ENCODE measurements at regions of chr17 and their contacts with region 1.

Region 1: GRCh38 chr17:48295362-48296288 is 134.4 kb downstream of the SKAP1 start:
- DNase-seq: no peak
- H3K4me3 Mint-ChIP-seq: peak overlapping the region; percentile 46
- H3K27ac Mint-ChIP-seq: peak overlapping the region; percentile 94
- H3K4me1 Mint-ChIP-seq: peaks cover 75% of the 10 kb centered on the region
- H3K27me3 Mint-ChIP-seq: no peaks in the 10 kb centered on the region
- CTCF ChIP-seq: no peak

Region 2: DNA sequence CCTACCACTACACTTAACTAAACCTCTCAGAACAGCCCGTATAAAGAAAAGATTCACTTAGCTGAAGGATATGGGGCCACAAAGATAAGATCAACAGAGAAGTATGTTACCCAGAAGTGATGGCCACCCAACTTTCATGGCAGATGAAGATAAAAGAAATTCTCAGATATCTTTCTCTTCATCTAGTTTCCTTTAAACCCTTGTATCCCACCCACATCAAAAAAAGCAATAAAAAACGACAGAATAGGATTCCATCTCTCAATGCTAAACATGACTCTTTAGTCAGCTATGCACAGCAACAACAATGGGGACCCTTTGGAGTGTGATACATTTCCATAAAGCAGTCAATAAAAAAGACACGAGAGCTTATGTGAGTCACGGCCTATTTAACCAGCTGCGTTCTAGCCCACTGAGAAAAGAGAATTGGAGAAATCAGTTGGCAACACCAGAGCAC is 101.5 kb before region 1 on chr17:
- CTCF ChIA-PET with region 1: no interaction called
- intact Hi-C with region 1: no loop called
- DNase-seq: no peak
- H3K4me3 Mint-ChIP-seq: no peak overlapping the region
- H3K27ac Mint-ChIP-seq: no peak overlapping the region
- H3K4me1 Mint-ChIP-seq: peaks cover 6% of the 10 kb centered on the region
- H3K27me3 Mint-ChIP-seq: no peaks in the 10 kb centered on the region
- CTCF ChIP-seq: no peak

Region 3: GRCh38 chr17:48237456-48237855 is 58.2 kb before region 1 on chr17:
- CTCF ChIA-PET with region 1: no interaction called
- intact Hi-C with region 1: no loop called
- DNase-seq: no peak
- H3K4me3 Mint-ChIP-seq: no peak overlapping the region
- H3K27ac Mint-ChIP-seq: peak overlapping the region; percentile 17
- H3K4me1 Mint-ChIP-seq: peaks cover 75% of the 10 kb centered on the region
- H3K27me3 Mint-ChIP-seq: no peaks in the 10 kb centered on the region
- CTCF ChIP-seq: no peak

Region 4: DNA sequence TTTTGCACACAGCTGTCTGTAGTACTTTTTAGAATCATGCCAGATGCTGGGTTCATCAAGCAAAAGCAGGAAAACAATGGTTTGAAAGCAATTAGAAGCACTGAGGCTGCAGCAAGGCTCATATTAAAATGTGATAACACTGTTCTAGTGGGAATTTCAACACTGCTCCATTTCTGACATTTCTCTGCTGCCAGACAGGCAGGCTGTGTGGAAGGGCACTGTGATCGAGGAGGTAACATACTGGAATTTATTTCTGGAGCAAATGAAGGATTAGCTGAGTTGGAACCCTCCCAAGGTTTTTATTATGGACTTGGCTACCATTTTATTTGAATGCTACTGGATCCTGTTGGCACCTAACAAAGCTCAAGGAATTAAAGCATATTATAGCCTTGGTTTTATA is 67.5 kb after region 1 on chr17:
- CTCF ChIA-PET with region 1: no interaction called
- intact Hi-C with region 1: no loop called
- DNase-seq: no peak
- H3K4me3 Mint-ChIP-seq: no peak overlapping the region
- H3K27ac Mint-ChIP-seq: no peak overlapping the region
- H3K4me1 Mint-ChIP-seq: no peaks in the 10 kb centered on the region
- H3K27me3 Mint-ChIP-seq: no peaks in the 10 kb centered on the region
- CTCF ChIP-seq: no peak

Region 5: DNA sequence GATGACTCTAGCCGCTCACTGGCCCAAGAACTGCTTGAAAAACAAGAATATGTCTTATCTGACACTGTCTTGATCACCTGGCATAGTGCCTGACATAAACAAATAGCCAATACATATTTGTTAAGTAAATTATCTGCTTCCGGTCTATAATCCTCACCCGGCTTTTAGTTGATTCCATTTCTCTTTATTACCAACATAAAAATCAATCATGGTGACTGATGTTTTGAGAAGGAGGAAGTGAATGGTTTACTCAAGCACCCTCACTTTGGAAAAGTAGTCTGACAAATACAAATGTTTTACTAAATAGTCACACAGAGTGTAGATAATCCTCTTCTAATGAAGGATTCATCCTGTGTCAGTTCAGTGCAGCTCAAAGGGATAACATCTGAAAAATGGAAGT is 87.4 kb after region 1 on chr17:
- CTCF ChIA-PET with region 1: no interaction called
- intact Hi-C with region 1: no loop called
- DNase-seq: no peak
- H3K4me3 Mint-ChIP-seq: no peak overlapping the region
- H3K27ac Mint-ChIP-seq: no peak overlapping the region
- H3K4me1 Mint-ChIP-seq: no peaks in the 10 kb centered on the region
- H3K27me3 Mint-ChIP-seq: peaks cover 23% of the 10 kb centered on the region
- CTCF ChIP-seq: no peak

Region 6: GRCh38 chr17:48577946-48578615 is 282.5 kb after region 1 on chr17 and contains the start of gene HOXB4:
- CTCF ChIA-PET with region 1: no interaction called
- intact Hi-C with region 1: loop called (anchors 5 kb)
- DNase-seq: peak; percentile 88
- H3K4me3 Mint-ChIP-seq: no peak within 1 kb of the TSS
- H3K27ac Mint-ChIP-seq: peak within 1 kb of the TSS; percentile 95
- H3K4me1 Mint-ChIP-seq: peaks cover 50% of the 10 kb centered on the region
- H3K27me3 Mint-ChIP-seq: peaks cover 20% of the 10 kb centered on the region
- CTCF ChIP-seq: no peak
- total RNA-seq, gene HOXB4: 28.0 and 31.1 TPM in 2 replicates